AG04449 (cell line): ENCODE measurements at regions of chr1 and their contacts with region 1.

Region 1: DNA sequence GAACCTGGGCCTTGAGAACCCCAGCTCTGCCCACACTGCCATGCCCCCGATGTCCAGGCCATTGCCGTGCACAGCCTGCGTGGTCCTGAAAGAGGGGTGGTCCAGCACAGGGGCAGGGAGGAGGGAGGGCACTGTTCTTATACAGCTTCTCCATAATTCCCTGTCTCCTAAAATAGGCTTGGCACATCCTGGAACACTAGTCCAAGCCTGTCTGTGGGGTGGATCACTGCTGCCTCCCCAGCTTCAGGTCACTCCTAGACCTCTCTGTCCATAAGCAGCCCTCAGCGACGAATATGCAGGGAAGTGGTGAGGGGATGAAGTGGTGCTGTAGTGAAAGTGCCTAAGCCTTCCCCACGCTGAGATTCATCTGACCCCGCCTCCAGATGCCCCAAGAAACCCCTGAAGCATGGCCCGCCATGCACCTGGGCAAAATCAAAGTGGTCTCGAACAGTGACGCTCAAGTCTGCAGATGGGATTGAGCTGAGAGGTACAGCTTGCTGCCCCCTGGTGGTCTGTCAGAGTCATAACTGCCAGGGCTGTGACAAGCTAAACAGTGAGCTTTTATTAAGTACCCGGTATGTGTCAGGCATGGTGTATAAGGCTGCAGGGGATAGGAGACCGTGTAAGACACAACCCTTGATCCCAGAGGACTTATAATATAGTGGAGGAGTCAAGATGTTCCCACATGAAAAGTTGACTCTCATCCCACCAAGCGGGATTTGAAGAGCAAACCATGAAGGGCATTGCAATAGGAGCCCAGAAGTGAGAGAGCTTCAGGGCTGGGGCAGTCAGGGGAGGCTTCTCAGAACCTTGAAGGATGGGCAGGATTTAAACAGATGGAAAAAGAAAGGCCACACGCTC is 66.6 kb downstream of the FAM163A start:
- DNase-seq: peak; percentile 24
- H3K4me3 ChIP-seq: no peak overlapping the region
- CTCF ChIP-seq: peak; percentile 91

Region 2: GRCh38 chr1:179677898-179678297 is 131.8 kb before region 1 on chr1:
- CTCF ChIA-PET with region 1: no interaction called
- POLR2A ChIA-PET with region 1: no interaction called
- DNase-seq: no peak
- H3K4me3 ChIP-seq: no peak overlapping the region
- CTCF ChIP-seq: no peak

Region 3: DNA sequence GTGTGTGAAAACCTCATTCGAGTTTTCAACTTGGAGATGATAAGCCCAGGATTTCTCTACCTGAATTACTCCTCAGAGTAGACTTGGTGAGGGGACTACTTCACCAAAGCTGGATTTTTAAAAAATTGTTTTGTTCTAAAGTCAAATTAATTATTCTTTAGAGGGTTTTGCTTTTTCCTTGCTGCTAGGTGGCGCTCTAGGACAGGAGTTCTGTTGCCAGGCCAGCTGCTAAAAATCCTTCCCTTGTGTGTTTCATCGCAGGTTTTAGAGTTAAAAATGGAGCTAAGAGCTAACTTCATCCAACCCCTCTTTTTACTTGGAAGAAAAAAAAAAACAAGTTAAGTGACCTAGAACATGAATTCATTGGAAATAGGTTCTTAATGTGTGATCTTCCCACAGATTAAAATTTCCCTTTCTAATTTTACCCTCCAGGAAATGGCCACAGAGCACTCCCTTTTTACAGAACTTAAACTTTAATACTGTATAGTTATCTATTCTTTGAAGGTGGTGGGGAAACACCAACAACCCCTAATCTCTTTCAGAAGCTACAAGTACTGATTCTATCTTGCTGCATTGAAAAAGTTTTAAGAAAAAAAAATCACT is 103.3 kb before region 1 on chr1:
- CTCF ChIA-PET with region 1: interaction called, 869 read pairs
- POLR2A ChIA-PET with region 1: no interaction called
- DNase-seq: no peak
- H3K4me3 ChIP-seq: no peak overlapping the region
- CTCF ChIP-seq: peak; percentile 56

Region 4: GRCh38 chr1:179728271-179728670 is 81.5 kb before region 1 on chr1:
- CTCF ChIA-PET with region 1: interaction called, 20 read pairs
- POLR2A ChIA-PET with region 1: no interaction called
- DNase-seq: no peak
- H3K4me3 ChIP-seq: no peak overlapping the region
- CTCF ChIP-seq: no peak

Region 5: DNA sequence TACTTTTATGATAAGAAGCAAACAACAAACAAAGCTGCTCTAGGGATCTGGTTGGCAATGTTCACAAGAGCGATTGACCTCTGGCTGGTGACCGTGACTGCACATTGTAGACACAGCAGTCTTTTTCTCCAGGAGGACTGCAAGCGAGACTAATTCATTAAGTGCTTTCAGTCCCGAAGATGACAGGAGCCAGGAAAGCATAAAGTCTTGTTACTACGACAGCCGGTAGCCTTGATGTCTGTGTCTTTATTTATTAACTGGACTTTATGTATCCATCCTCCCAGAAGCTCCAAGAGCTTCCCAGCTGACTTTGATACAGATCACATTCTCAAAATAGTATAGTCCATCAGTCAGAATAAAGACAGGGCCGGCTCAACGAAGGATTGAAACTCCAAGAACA is 48.4 kb before region 1 on chr1:
- CTCF ChIA-PET with region 1: interaction called, 20 read pairs
- POLR2A ChIA-PET with region 1: no interaction called
- DNase-seq: no peak
- H3K4me3 ChIP-seq: no peak overlapping the region
- CTCF ChIP-seq: no peak

Region 6: GRCh38 chr1:179794669-179795068 is 15.1 kb before region 1 on chr1:
- CTCF ChIA-PET with region 1: interaction called, 251 read pairs
- POLR2A ChIA-PET with region 1: no interaction called
- DNase-seq: no peak
- H3K4me3 ChIP-seq: no peak overlapping the region
- CTCF ChIP-seq: no peak

Region 7: DNA sequence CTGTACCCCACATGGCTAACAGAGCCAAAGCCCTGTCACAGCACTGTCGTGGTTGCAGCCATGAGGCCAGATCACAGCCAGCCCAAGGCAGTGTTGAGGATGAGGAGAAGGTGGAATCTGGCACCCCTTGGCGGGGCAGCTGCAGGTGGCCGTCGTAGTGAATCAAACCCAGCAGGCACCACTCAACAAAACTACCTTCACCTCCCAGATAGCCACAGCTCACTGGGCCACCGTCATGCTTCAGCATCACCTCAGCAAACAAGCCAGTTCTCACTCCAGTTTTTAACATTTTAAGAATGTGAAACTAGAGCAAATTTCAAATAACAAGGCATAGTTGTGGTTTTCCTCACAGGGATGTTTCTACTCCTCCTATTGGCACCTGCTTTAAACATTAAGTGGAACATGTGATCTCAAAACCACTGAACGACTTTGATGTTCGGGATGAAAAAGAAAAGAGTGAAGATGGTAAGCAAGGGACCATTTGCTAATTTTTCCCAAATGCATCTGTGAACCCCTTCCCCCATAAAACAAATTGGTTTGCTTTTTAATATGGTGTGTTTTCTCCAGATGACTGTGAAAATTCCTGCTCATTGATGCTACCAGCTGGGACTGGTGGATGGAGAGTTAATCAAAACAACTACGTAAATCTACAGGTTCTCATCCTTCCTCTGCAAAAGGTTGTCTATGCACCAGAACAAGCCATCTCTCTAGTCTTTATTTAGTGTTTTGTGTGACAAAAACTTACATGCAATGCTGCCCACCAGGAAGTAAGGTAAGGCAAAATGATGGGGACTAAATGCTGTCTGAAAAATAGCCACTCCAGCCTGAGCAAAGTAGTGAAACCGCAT is 22.3 kb after region 1 on chr1:
- CTCF ChIA-PET with region 1: interaction called, 53 read pairs
- POLR2A ChIA-PET with region 1: no interaction called
- DNase-seq: no peak
- H3K4me3 ChIP-seq: no peak overlapping the region
- CTCF ChIP-seq: no peak

Region 8: GRCh38 chr1:180178511-180179161 is 368.9 kb after region 1 on chr1:
- CTCF ChIA-PET with region 1: interaction called, 21 read pairs
- POLR2A ChIA-PET with region 1: no interaction called
- DNase-seq: no peak
- H3K4me3 ChIP-seq: no peak overlapping the region
- CTCF ChIP-seq: peak; percentile 94